GM10248 (cell line): ENCODE measurements at regions of chr22 and their contacts with region 1.

Region 1: DNA sequence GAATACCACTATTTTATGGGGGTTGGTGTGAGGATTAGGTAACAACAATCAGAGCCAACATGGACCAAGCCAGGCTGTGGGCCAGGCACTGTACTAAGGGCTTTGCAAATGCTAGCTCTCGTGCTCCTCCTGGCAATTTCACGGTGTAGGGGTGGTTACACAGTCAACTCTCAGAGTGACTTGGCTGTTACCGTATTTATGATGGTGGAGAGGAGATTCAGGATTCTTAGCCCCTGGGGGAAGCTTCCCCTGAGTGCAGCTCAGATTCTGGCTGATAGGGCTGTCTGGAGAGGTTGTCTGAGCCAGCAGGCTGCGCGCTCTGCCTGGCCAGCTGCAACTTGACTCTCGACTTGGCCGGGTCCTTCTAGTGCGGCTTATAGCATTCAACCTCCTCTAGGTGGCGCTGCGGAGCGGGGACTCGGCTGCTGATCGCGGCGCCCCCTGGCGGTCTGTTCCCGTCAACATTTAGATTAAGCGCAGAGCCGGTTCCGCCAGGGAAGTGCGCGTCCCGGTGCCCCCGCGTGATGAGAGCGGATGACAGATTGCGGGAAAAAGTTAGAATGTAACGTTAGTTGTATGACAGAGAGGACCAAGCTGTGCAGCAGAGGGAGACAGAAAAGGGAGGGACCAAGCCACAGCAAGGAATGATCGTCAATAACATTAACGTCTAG is 4.5 kb upstream of the NCF4 start:
- DNase-seq: peak; percentile 82
- CTCF ChIP-seq: peak; percentile 100

Region 2: DNA sequence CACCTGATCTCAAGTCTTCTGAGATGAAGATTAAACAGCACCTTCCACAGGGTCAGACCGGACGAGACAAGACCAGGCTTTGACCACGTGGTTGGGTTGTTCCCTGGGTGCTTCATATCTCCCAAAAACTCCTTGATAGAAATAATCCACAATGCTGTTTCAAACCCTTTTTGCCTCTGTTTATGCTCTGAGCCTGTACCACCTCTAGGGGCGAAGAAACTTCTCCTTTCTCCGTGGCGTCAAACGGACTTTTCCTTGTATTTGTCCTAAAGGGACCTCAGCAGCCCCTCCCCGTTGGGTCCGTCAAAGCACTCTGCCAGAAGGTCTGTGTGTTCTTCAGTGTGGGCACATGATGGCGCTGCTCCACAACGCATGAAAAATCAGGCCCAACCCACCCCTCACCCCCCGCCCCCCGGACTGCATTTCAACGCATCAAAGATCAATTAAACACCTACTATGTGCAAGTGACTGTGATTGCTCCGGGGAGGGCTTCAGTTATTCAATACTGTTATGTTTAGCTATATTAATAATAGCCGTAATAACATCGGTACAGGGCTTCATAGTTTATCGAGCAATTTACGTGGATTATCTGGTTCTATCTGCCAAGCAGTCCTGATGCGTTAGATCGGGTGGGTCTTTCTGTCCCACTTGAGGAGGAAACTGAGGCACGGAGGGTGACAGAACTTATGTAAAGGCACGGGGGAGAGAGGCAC is 310.0 kb before region 1 on chr22:
- CTCF ChIA-PET with region 1: interaction called, 35 read pairs
- POLR2A ChIA-PET with region 1: no interaction called
- DNase-seq: peak; percentile 65
- CTCF ChIP-seq: peak; percentile 58

Region 3: DNA sequence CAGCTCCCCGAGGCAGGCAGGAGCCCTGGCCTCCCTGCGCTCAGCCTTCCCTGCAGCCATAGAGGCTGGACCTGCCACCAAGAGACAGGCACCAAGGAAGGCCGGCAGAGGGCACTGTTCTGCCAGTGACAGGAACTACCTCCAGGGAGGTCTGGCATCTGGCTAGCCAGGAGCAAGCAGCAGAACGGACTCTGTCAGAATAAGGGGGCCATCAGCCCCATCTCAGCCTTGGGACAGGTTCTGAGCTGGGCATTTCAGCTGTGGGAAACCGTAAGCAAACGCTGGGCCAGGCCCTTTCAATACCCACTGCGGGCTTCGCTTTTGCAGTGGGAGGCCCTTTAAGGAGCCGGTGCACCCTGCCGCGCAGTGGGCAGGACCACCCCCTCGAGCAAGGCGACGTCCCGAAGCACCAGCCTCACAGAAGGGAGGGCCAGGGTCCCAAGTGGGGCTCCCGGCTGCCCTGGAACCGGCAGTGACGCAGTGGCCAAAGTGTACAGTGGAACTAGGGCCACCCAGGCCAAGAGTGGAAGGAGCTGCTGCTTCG is 98.5 kb before region 1 on chr22:
- CTCF ChIA-PET with region 1: interaction called, 19 read pairs
- POLR2A ChIA-PET with region 1: no interaction called
- DNase-seq: peak; percentile 82
- CTCF ChIP-seq: peak; percentile 83

Region 4: DNA sequence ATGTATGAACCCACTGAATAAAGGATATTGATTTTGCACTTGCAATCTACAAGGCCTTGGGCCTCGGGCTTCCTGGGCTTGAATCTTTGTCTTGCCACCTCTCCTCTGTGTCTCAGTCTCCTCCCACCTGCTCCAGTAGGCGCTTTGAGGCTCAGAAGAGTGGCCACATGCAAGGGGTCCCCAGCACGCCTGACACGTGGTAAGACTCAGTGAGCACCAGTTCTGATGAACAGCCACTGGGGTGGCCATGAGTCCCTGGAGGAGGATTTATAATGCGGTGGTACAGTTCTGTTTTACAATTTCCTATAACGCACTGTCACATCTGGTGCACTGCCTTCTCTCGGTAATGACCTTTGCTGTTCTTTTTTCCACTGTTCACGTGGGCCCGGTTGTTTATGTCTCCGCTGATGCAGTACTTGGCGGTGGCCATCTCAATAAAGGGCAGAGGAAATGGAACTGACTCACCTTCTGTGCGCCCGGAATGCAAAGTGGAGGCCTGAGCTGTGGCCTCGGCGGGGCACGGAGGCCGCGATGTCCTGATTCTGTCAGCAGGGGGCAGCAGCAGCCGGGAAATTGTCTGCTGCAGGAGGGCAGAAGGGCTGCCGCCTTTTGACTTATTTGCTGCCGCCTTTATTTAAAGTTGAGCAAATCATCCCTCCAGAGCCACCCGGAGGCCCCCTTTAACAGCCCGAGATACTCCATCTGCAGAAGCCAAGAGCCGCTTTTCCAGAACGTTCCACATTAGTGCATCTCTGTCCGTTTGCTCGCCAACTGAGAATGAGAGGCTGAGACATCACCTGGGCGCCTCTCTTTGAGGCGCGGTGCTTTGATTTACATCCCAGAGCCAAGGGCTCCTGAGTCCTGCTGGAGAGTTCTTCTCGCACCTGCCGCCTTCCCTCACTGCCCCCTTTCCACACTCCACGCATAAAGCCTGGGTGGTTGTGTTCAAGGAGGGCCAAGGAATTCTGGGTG is 74.3 kb before region 1 on chr22:
- CTCF ChIA-PET with region 1: interaction called, 118 read pairs
- POLR2A ChIA-PET with region 1: no interaction called
- DNase-seq: peak; percentile 90
- CTCF ChIP-seq: peak; percentile 98

Region 5: GRCh38 chr22:36879775-36880174 is 23.5 kb after region 1 on chr22:
- CTCF ChIA-PET with region 1: interaction called, 22 read pairs
- POLR2A ChIA-PET with region 1: no interaction called
- DNase-seq: no peak
- CTCF ChIP-seq: no peak

Region 6: DNA sequence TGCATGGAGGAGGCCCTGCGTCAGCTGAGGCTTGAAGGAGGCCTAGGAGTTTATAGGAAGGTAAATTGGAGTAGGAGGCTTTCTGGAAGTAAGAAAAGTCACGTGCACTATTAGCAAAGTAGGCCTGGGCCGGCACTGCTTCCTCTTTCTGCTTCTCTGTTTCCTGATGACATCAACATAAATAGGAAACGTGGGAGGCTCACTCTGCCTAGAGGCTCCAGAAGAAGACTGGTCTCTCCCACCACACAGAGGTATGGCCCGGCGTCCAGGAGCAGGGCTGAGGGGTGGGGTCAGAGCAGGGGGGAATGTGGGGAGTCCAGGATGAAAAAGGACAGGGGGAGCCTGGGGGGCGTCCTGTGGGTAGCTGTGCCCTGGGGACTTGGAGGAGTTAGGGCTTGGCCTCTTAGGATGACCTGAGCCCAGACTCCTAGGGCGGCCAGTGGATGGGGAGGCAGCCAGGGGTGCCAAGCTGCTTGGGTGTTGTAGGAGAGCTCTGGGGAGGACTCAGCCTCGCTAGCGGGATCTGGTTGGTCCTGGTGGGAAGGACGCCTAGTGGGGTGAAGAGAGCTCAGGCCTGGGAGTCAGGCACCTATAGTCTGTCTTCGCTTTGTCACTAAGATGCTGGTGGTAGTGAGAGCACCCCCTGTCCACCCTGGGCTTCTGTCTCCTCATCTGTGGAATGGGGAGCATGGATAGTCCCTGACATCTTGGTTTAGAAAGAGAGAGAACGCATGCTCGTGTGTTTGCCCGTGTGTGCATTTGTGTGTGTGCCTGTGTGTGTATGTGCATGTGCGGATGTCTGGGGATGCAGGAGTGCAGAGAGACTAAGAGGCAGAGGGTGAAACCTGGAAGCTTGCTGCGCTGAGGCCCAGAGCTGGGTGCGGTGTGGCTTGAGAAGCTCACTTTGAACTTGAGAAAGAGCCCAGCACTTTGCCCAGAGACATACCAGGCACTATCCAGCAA is 57.5 kb after region 1 on chr22 and contains the start of gene CSF2RB:
- CTCF ChIA-PET with region 1: interaction called, 42 read pairs
- POLR2A ChIA-PET with region 1: no interaction called
- DNase-seq: peak; percentile 61
- CTCF ChIP-seq: no peak

Region 7: GRCh38 chr22:36966851-36967540 is 110.7 kb after region 1 on chr22:
- CTCF ChIA-PET with region 1: interaction called, 13 read pairs
- POLR2A ChIA-PET with region 1: no interaction called
- DNase-seq: no peak
- CTCF ChIP-seq: no peak